ENCODE measurements at regions of chr17 and their contacts with region 1.

Region 1: GRCh38 chr17:45828628-45829027 is 16.1 kb upstream of the SPPL2C start:
- DNase-seq: no peak
- ATAC-seq: no peak
- H3K4me3 Mint-ChIP-seq: no peak overlapping the region
- H3K27ac Mint-ChIP-seq: no peak overlapping the region
- H3K4me1 Mint-ChIP-seq: no peaks in the 10 kb centered on the region
- H3K27me3 Mint-ChIP-seq: no peaks in the 10 kb centered on the region

Region 2: GRCh38 chr17:45640141-45640850 is 188.3 kb before region 1 on chr17:
- CTCF ChIA-PET with region 1: interaction called, 76 read pairs
- DNase-seq: peak; percentile 81
- ATAC-seq: peak; percentile 81
- H3K4me3 Mint-ChIP-seq: no peak overlapping the region
- H3K27ac Mint-ChIP-seq: no peak overlapping the region
- H3K4me1 Mint-ChIP-seq: peaks cover 17% of the 10 kb centered on the region
- H3K27me3 Mint-ChIP-seq: no peaks in the 10 kb centered on the region

Region 3: GRCh38 chr17:45648642-45649041 is 180.0 kb before region 1 on chr17:
- CTCF ChIA-PET with region 1: interaction called, 18 read pairs
- DNase-seq: no peak
- ATAC-seq: no peak
- H3K4me3 Mint-ChIP-seq: no peak overlapping the region
- H3K27ac Mint-ChIP-seq: no peak overlapping the region
- H3K4me1 Mint-ChIP-seq: peaks cover 20% of the 10 kb centered on the region
- H3K27me3 Mint-ChIP-seq: peaks cover 15% of the 10 kb centered on the region

Region 4: GRCh38 chr17:45782889-45783592 is 45.6 kb before region 1 on chr17:
- CTCF ChIA-PET with region 1: interaction called, 13 read pairs
- DNase-seq: no peak
- ATAC-seq: no peak
- H3K4me3 Mint-ChIP-seq: peak overlapping the region; percentile 25
- H3K27ac Mint-ChIP-seq: no peak overlapping the region
- H3K4me1 Mint-ChIP-seq: peaks cover 3% of the 10 kb centered on the region
- H3K27me3 Mint-ChIP-seq: peaks cover 73% of the 10 kb centered on the region

Region 5: GRCh38 chr17:45852535-45853297 is 24.1 kb after region 1 on chr17:
- CTCF ChIA-PET with region 1: interaction called, 30 read pairs
- DNase-seq: peak; percentile 66
- ATAC-seq: peak; percentile 49
- H3K4me3 Mint-ChIP-seq: no peak overlapping the region
- H3K27ac Mint-ChIP-seq: no peak overlapping the region
- H3K4me1 Mint-ChIP-seq: peaks cover 5% of the 10 kb centered on the region
- H3K27me3 Mint-ChIP-seq: peaks cover 24% of the 10 kb centered on the region

Region 6: DNA sequence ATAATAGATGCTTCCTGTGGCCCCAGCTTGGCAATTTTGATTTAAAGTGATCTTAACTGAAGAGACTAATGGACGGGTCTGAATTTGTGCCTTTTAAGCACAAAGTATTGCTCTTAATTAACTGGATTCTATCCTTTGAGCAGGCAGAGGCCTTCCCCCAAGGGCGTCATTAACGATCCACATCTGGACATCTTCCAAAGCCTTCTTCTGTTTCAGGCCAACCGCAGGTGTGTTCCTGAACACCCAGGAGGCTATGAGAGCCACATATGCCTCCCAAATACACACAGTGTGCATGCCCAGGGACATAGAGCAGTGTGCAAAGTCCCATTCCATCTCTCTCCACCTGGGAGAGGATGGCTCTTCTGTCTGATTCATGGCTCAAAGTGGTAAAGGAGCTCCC is 108.0 kb after region 1 on chr17:
- CTCF ChIA-PET with region 1: no interaction called
- DNase-seq: no peak
- ATAC-seq: no peak
- H3K4me3 Mint-ChIP-seq: no peak overlapping the region
- H3K27ac Mint-ChIP-seq: no peak overlapping the region
- H3K4me1 Mint-ChIP-seq: no peaks in the 10 kb centered on the region
- H3K27me3 Mint-ChIP-seq: peaks cover 32% of the 10 kb centered on the region

Region 7: GRCh38 chr17:45971698-45972141 is 143.1 kb after region 1 on chr17:
- CTCF ChIA-PET with region 1: no interaction called
- DNase-seq: no peak
- ATAC-seq: no peak
- H3K4me3 Mint-ChIP-seq: no peak overlapping the region
- H3K27ac Mint-ChIP-seq: no peak overlapping the region
- H3K4me1 Mint-ChIP-seq: peaks cover 2% of the 10 kb centered on the region
- H3K27me3 Mint-ChIP-seq: peaks cover 32% of the 10 kb centered on the region